GM12878 (cell line): ENCODE measurements at regions of chr3 and their contacts with region 1.

Region 1: GRCh38 chr3:138594150-138594934 is at the start of gene CEP70:
- DNase-seq: peak; percentile 78
- ATAC-seq: peak; percentile 95
- H3K4me3 ChIP-seq: peak within 1 kb of the TSS; percentile 62
- H3K27ac ChIP-seq: peak within 1 kb of the TSS; percentile 24; the same call in 1 of the 2 replicates
- H3K4me1 ChIP-seq: peaks cover 10% of the 10 kb centered on the region
- H3K27me3 ChIP-seq: no peaks in the 10 kb centered on the region; a peak in 1 of 4 replicates
- CTCF ChIP-seq: peak; percentile 72 to 91 (median 90)
- EP300 ChIP-seq: no peak
- POLR2A ChIP-seq: peak; percentile 77
- RAD21 ChIP-seq: peak; percentile 91
- polyA plus RNA-seq, gene CEP70: 1.8 to 1.9 TPM

Region 2: GRCh38 chr3:138456961-138457862 is 137.1 kb before region 1 on chr3:
- CTCF ChIA-PET with region 1: no interaction called
- POLR2A ChIA-PET with region 1: no interaction called
- RAD21 ChIA-PET with region 1: no interaction called
- SMC1A ChIA-PET with region 1: no interaction called
- in situ Hi-C with region 1: no loop called
- intact Hi-C with region 1: no loop called
- DNase-seq: no peak
- ATAC-seq: no peak
- H3K4me3 ChIP-seq: no peak overlapping the region
- H3K27ac ChIP-seq: no peak overlapping the region
- H3K4me1 ChIP-seq: no peaks in the 10 kb centered on the region
- H3K27me3 ChIP-seq: no peaks in the 10 kb centered on the region; a peak in 3 of 4 replicates
- CTCF ChIP-seq: no peak
- EP300 ChIP-seq: no peak
- POLR2A ChIP-seq: no peak
- RAD21 ChIP-seq: no peak

Region 3: GRCh38 chr3:138479438-138479863 is 114.9 kb before region 1 on chr3:
- CTCF ChIA-PET with region 1: interaction called, 26 read pairs
- POLR2A ChIA-PET with region 1: no interaction called
- RAD21 ChIA-PET with region 1: interaction called, 20 read pairs
- SMC1A ChIA-PET with region 1: interaction called, 19 read pairs
- in situ Hi-C with region 1: no loop called
- intact Hi-C with region 1: loop called (anchors 1 kb)
- DNase-seq: no peak
- ATAC-seq: peak; percentile 81
- H3K4me3 ChIP-seq: no peak overlapping the region
- H3K27ac ChIP-seq: no peak overlapping the region
- H3K4me1 ChIP-seq: no peaks in the 10 kb centered on the region
- H3K27me3 ChIP-seq: 0 out of 4 replicates have a peak, but pooled peaks cover 0 to 2% of the 10 kb centered on the region in 2 experiments
- CTCF ChIP-seq: peak; percentile 80 to 82 (median 81)
- EP300 ChIP-seq: no peak
- POLR2A ChIP-seq: no peak
- RAD21 ChIP-seq: peak; percentile 76

Region 4: DNA sequence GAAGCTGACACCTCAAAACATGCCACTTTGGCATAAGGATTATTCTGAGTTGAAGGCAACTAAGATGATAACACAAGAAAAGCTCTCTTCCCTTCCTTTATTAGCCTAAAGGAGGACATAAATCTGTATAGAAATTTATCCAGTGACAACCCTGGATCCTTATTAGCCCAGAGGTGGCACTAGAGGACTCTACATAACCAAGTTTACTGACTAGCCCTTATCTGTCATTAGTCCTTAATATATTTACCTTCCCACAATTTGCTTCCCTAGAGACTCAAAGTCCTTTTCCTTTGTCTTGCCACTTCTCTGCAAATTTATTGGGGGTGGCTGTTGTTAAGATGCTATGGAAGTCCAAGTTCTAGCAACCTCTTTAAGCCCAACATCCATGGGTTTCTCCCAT is 26.9 kb before region 1 on chr3:
- CTCF ChIA-PET with region 1: interaction called, 11 read pairs
- POLR2A ChIA-PET with region 1: no interaction called
- RAD21 ChIA-PET with region 1: interaction called, 7 read pairs
- SMC1A ChIA-PET with region 1: interaction called, 3 read pairs
- in situ Hi-C with region 1: no loop called
- intact Hi-C with region 1: no loop called
- DNase-seq: no peak
- ATAC-seq: no peak
- H3K4me3 ChIP-seq: no peak overlapping the region
- H3K27ac ChIP-seq: no peak overlapping the region
- H3K4me1 ChIP-seq: no peaks in the 10 kb centered on the region
- H3K27me3 ChIP-seq: no peaks in the 10 kb centered on the region
- CTCF ChIP-seq: peak in 1 of 3 experiments; percentile 8; a peak in 2 of 6 replicates
- EP300 ChIP-seq: no peak
- POLR2A ChIP-seq: no peak
- RAD21 ChIP-seq: no peak

Region 5: DNA sequence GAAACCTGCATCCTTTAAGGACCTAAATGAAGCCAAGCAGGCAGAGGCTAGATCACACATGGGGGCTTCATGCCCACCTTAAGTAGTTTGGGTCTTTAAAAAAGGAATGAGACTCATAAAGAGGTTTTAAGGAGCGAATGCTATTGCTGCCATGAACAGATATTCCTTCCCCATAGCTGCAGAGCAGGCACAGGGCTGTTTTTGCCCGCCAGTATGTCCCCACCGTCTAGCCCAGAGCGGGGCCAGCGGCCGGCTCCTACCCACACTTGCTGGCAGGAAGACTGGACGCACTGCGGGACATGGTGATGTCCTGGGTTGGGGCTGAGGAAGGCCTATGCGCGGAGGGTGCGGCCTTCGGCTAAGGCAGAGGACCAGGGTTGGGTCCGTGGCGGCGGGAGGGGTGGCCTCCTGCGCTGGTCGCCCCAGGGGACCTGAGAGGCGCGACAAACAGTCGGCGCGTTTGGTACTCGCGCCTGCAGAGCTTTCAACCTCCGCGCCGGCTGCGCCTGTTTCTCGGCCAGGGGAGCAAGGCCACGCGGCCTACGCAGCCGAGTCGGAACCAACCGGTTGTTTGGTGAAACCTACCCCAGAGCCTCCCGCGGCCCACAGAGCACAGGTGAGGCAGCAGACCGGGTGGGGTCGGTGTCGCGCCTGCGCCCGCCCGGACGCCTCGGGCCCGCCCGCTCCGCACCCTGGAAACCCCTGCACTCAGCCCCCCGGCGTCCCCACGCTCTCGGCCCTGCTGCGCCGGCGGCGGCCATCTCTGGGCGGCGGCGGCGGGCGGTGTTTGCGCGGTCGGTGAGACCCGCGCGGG is 14.2 kb after region 1 on chr3 and contains the start of gene FAIM:
- CTCF ChIA-PET with region 1: interaction called, 20 read pairs
- POLR2A ChIA-PET with region 1: interaction called, 6 read pairs
- RAD21 ChIA-PET with region 1: interaction called, 3 read pairs
- SMC1A ChIA-PET with region 1: interaction called, 5 read pairs
- in situ Hi-C with region 1: no loop called
- intact Hi-C with region 1: no loop called
- DNase-seq: no peak
- ATAC-seq: peak; percentile 89
- H3K4me3 ChIP-seq: peak within 1 kb of the TSS; percentile 68
- H3K27ac ChIP-seq: peak within 1 kb of the TSS; percentile 38
- H3K4me1 ChIP-seq: peaks cover 5% of the 10 kb centered on the region
- H3K27me3 ChIP-seq: no peaks in the 10 kb centered on the region
- CTCF ChIP-seq: no peak
- EP300 ChIP-seq: no peak
- POLR2A ChIP-seq: peak; percentile 81
- RAD21 ChIP-seq: no peak
- polyA plus RNA-seq, gene FAIM: 21.5 to 32.8 TPM

Region 6: GRCh38 chr3:138678086-138678485 is 83.7 kb after region 1 on chr3:
- CTCF ChIA-PET with region 1: interaction called, 15 read pairs
- POLR2A ChIA-PET with region 1: no interaction called
- RAD21 ChIA-PET with region 1: no interaction called
- SMC1A ChIA-PET with region 1: interaction called, 3 read pairs
- in situ Hi-C with region 1: no loop called
- intact Hi-C with region 1: no loop called
- DNase-seq: no peak
- ATAC-seq: no peak
- H3K4me3 ChIP-seq: no peak overlapping the region
- H3K27ac ChIP-seq: no peak overlapping the region
- H3K4me1 ChIP-seq: no peaks in the 10 kb centered on the region
- H3K27me3 ChIP-seq: no peaks in the 10 kb centered on the region
- CTCF ChIP-seq: no peak
- EP300 ChIP-seq: no peak
- POLR2A ChIP-seq: no peak
- RAD21 ChIP-seq: no peak

Region 7: DNA sequence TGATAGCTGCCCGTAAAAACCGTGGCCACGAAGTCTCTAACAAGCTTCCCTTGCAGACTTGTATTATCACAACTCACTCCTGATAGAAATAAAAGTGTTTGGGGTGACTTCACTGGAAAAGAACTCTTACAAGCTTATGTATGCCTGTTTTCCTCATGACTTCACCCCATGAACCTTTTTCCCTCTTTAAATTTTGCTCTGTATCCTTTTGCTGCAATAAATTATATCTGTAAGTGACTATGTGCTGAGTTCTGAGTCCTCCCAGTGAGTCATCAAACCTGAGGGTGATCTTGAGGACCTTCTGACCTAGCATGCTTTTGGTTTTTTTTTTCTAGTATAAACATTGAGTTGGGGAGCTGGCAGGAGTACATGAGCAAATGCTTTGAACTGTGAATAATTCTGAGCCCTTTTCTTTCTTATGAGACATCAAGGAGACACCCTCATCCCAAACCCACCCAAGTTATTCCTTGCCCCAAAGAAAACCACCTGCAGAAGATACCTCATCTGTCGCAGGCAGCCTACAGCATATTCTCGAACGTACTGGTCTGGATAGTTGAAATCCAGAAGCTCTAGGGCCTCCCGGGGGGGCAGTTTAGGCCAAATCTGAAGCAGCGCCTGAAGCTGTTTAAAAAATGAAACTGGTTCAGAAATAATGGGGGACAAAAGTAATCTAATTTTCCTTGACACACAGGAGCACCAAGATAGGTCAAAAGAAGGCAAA is 100.1 kb after region 1 on chr3:
- CTCF ChIA-PET with region 1: interaction called, 31 read pairs
- POLR2A ChIA-PET with region 1: interaction called, 7 read pairs
- RAD21 ChIA-PET with region 1: interaction called, 17 read pairs
- SMC1A ChIA-PET with region 1: interaction called, 32 read pairs
- in situ Hi-C with region 1: no loop called
- intact Hi-C with region 1: no loop called
- DNase-seq: no peak
- ATAC-seq: no peak
- H3K4me3 ChIP-seq: no peak overlapping the region
- H3K27ac ChIP-seq: no peak overlapping the region
- H3K4me1 ChIP-seq: no peaks in the 10 kb centered on the region
- H3K27me3 ChIP-seq: no peaks in the 10 kb centered on the region
- CTCF ChIP-seq: no peak
- EP300 ChIP-seq: no peak
- POLR2A ChIP-seq: no peak
- RAD21 ChIP-seq: no peak

Region 8: DNA sequence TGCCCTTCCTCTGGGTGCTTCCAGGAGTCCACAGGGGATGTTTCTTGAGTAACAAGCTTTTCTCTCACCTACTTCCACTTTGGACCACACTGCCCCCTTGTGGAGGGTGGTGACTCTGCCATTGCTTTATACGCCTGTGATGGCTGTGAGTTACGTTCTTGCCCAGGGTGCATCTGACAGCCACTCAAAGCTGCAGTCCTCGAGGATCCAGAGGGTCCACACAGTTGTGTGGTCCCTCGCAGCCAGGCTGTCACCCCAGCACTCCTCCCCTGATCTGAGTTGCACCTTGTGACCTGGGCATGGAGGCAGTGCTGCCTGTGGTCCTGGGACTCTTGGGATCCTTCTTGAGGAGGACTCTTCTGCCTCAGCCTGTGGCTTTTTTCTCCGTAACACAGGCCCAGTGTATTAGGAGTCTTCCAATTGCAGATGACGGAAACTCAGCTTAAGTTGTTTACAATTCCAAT is 329.2 kb after region 1 on chr3:
- CTCF ChIA-PET with region 1: interaction called, 451 read pairs
- POLR2A ChIA-PET with region 1: no interaction called
- RAD21 ChIA-PET with region 1: interaction called, 36 read pairs
- SMC1A ChIA-PET with region 1: interaction called, 28 read pairs
- in situ Hi-C with region 1: loop called (anchors 5 kb)
- intact Hi-C with region 1: no loop called
- DNase-seq: peak; percentile 35
- ATAC-seq: peak; percentile 98
- H3K4me3 ChIP-seq: no peak overlapping the region
- H3K27ac ChIP-seq: no peak overlapping the region
- H3K4me1 ChIP-seq: no peaks in the 10 kb centered on the region
- H3K27me3 ChIP-seq: no peaks in the 10 kb centered on the region
- CTCF ChIP-seq: peak; percentile 90 to 93 (median 91)
- EP300 ChIP-seq: no peak
- POLR2A ChIP-seq: no peak
- RAD21 ChIP-seq: peak; percentile 81